ENCODE measurements at regions of chr19 and their contacts with region 1.

Region 1: DNA sequence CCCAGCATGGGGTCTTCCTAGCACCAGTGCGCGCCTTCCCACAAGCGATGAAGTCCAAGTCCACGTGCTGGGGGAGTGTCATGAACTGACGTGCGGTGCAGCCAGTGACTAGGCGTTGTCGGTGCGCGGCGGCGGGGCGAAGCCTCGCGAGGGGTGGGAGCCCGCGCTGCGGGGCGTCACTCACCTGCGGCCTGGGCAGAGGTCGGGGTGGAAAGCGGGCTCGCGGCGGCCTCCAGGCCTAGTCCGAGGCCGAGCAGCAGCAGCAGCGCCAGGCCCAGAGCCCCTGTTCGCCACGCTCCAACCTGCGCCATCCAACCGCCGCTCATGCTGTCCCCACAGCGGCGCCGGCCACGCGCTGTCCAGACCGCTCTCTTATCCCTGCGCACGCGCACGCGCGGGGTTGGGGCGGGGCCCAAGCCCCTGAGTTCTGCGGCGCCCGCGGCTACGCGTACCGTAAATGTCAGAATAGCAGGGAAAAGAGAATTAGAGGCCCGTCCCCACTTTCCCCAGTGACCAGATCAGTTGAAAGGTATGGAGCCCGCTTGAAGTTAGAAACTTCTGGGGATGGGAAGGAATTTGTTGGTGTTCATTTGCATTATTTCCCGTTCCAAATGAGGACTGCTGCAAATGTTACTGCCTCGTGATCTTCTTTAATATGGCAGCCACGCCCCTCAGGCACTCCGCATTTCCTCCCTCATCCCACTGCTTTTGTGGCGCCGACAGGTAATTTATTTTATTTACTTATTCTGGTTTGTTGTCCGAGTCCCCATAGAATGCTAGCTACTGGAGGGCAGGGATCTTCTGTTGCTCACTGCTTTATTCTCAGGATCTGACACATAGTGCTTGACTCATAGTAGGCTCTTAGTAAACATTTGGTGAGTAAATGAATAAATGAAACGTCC is at the start of gene CD320:
- DNase-seq: peak; percentile 93 to 95
- ATAC-seq: peak; percentile 94 to 95 (median 95)
- H3K4me3 ChIP-seq: peak within 1 kb of the TSS; percentile 73
- H3K27ac ChIP-seq: peak within 1 kb of the TSS; percentile 84
- H3K4me1 ChIP-seq: peaks cover 30% of the 10 kb centered on the region
- H3K27me3 ChIP-seq: no peaks in the 10 kb centered on the region
- CTCF ChIP-seq: no peak
- total RNA-seq, gene CD320: 17.4 to 25.4 (median 22.4) TPM

Region 2: DNA sequence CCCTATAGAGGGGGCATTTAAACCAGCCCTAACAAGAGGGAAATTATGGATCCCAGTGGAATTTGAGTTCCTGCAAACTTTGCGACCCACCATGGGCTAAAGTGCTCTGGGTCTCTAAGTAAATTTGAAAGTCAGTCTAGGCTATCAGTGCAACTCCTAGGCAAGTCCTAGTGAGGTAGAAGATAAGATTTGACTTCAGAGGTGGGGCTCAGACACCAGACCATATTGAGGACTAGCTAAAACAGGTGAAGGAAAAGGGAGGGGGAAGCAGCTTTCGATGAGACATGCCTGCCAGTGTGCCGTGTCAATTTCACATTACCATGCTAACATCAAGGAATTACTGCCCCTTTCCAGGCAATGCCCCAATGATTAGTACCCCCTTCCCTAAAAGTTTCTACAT is 38.5 kb before region 1 on chr19:
- intact Hi-C with region 1: loop called in 1 of 2 experiments (anchors 5 kb)
- DNase-seq: no peak
- ATAC-seq: no peak
- H3K4me3 ChIP-seq: no peak overlapping the region
- H3K27ac ChIP-seq: no peak overlapping the region
- H3K4me1 ChIP-seq: no peaks in the 10 kb centered on the region
- H3K27me3 ChIP-seq: no peaks in the 10 kb centered on the region
- CTCF ChIP-seq: no peak